Calu3 (cell line): ENCODE measurements at regions of chr11 and their contacts with region 1.

Region 1: GRCh38 chr11:87290304-87290922 is 252.7 kb downstream of the TMEM135 start:
- DNase-seq: no peak
- H3K4me3 Mint-ChIP-seq: no peak overlapping the region
- H3K27ac Mint-ChIP-seq: no peak overlapping the region
- H3K4me1 Mint-ChIP-seq: no peaks in the 10 kb centered on the region
- H3K27me3 Mint-ChIP-seq: no peaks in the 10 kb centered on the region
- CTCF ChIP-seq: peak; percentile 28

Region 2: GRCh38 chr11:86938900-86939880 is 351.2 kb before region 1 on chr11:
- CTCF ChIA-PET with region 1: interaction called, 6 read pairs
- intact Hi-C with region 1: loop called (anchors 1 kb)
- DNase-seq: no peak
- H3K4me3 Mint-ChIP-seq: no peak overlapping the region
- H3K27ac Mint-ChIP-seq: no peak overlapping the region
- H3K4me1 Mint-ChIP-seq: peaks cover 20% of the 10 kb centered on the region
- H3K27me3 Mint-ChIP-seq: no peaks in the 10 kb centered on the region
- CTCF ChIP-seq: no peak

Region 3: DNA sequence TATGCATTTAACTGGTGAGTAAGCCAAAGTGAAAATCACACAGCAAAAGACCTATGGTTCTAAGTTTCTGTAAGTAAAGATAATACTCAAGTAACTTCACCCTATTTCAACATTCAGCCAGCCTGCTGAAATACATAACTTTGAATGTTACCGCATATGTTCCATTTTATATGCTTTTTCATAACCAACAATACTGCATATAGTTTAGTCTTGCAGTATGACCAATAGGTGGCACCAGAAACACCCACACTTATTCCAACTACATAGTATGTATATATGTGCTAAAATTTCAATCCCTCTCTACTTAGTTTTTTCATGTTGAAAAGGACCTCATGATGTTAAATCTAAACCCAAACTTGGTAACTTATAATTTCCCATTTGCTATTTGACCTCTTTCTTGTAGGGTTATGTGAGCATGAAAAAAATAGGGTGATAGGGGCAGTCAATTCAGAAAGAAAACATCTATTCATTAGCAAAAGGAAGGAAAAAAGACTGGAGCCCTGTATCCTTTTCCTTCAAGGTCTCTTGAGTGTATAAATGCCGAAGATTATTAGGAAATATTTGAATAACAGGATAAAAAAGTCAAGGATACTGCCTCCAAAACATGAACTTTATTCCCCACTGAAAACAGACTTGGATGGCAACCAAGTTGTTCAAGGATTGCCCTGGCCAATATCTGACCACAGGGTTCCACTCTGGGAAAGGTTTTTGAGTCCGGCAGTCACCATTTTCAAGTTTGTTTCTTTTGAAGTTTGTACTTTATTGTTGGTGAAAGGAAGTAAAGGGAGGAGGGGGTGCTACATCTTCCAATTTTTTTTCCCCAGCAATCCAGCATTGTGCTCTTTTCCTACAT is 311.4 kb before region 1 on chr11:
- CTCF ChIA-PET with region 1: no interaction called
- intact Hi-C with region 1: loop called (anchors 1 kb)
- DNase-seq: no peak
- H3K4me3 Mint-ChIP-seq: no peak overlapping the region
- H3K27ac Mint-ChIP-seq: no peak overlapping the region
- H3K4me1 Mint-ChIP-seq: no peaks in the 10 kb centered on the region
- H3K27me3 Mint-ChIP-seq: no peaks in the 10 kb centered on the region
- CTCF ChIP-seq: peak; percentile 19

Region 4: DNA sequence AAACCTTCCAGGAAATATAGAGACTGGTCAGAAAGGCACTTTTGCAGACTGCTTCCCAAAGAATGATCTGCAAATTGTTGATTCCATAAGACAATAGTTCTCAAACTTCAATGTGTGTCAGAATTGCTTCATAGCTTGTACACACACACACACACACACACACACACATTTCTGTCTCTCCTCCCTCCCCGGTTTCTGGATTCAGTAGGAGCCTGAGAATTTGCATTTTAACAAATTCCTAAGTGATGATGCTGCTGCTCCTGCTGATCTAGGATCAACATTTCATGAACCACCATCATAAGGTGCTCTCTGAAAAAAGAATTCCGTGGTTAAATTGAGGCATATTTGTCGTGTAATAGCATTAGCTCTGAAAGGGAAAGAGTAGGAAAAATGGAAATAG is 299.9 kb before region 1 on chr11:
- CTCF ChIA-PET with region 1: no interaction called
- intact Hi-C with region 1: loop called (anchors 5 kb)
- DNase-seq: peak; percentile 3
- H3K4me3 Mint-ChIP-seq: no peak overlapping the region
- H3K27ac Mint-ChIP-seq: no peak overlapping the region
- H3K4me1 Mint-ChIP-seq: no peaks in the 10 kb centered on the region
- H3K27me3 Mint-ChIP-seq: no peaks in the 10 kb centered on the region
- CTCF ChIP-seq: no peak